Activated CD8-positive, alpha-beta T cell treated with anti-CD3 and anti-CD28 coated beads for 36 hours (primary cell): ENCODE measurements at regions of chr6 and their contacts with region 1.

Region 1: GRCh38 chr6:25223490-25223991 is 55.6 kb upstream of the CARMIL1 start:
- DNase-seq: peak; percentile 77
- ATAC-seq: peak; percentile 77
- H3K4me3 Mint-ChIP-seq: peak overlapping the region; percentile 59
- H3K27ac Mint-ChIP-seq: no peak overlapping the region
- H3K4me1 Mint-ChIP-seq: peaks cover 11% of the 10 kb centered on the region
- H3K27me3 Mint-ChIP-seq: peaks cover 6% of the 10 kb centered on the region
- CTCF ChIP-seq: peak; percentile 97

Region 2: DNA sequence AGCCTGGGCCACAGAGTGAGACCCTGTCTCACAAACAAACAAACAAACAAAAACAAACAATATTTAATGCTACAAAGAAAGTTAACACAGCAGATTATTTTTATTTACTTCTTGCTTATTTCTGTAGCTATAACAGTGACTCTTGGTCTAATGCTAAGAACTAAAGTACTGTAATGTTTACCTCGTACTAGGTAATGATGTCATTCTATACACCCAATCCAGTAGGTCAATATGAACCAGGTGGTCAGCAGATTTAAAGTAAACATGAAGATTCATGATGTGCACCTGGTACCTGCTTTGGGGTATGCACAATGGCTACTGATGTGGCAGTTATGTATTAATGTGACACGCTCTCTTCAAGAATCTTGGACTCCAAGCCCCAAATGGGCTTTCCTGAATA is 19.0 kb after region 1 on chr6:
- CTCF ChIA-PET with region 1: interaction called, 11 read pairs
- POLR2A ChIA-PET with region 1: no interaction called
- intact Hi-C with region 1: no loop called
- DNase-seq: no peak
- ATAC-seq: no peak
- H3K4me3 Mint-ChIP-seq: no peak overlapping the region
- H3K27ac Mint-ChIP-seq: no peak overlapping the region
- H3K4me1 Mint-ChIP-seq: peaks cover 6% of the 10 kb centered on the region
- H3K27me3 Mint-ChIP-seq: peaks cover 2% of the 10 kb centered on the region
- CTCF ChIP-seq: no peak

Region 3: GRCh38 chr6:25250878-25251277 is 27.3 kb after region 1 on chr6:
- CTCF ChIA-PET with region 1: interaction called, 13 read pairs
- POLR2A ChIA-PET with region 1: no interaction called
- intact Hi-C with region 1: no loop called
- DNase-seq: peak; percentile 46
- ATAC-seq: peak; percentile 83
- H3K4me3 Mint-ChIP-seq: no peak overlapping the region
- H3K27ac Mint-ChIP-seq: no peak overlapping the region
- H3K4me1 Mint-ChIP-seq: peaks cover 18% of the 10 kb centered on the region
- H3K27me3 Mint-ChIP-seq: peaks cover 10% of the 10 kb centered on the region
- CTCF ChIP-seq: no peak

Region 4: GRCh38 chr6:25556516-25556915 is 333.0 kb after region 1 on chr6:
- CTCF ChIA-PET with region 1: interaction called, 32 read pairs
- POLR2A ChIA-PET with region 1: no interaction called
- intact Hi-C with region 1: loop called (anchors 5 kb)
- DNase-seq: peak; percentile 90
- ATAC-seq: peak; percentile 66
- H3K4me3 Mint-ChIP-seq: no peak overlapping the region
- H3K27ac Mint-ChIP-seq: no peak overlapping the region
- H3K4me1 Mint-ChIP-seq: peaks cover 2% of the 10 kb centered on the region
- H3K27me3 Mint-ChIP-seq: no peaks in the 10 kb centered on the region
- CTCF ChIP-seq: peak; percentile 80

Region 5: GRCh38 chr6:25564943-25565342 is 341.4 kb after region 1 on chr6:
- CTCF ChIA-PET with region 1: interaction called, 11 read pairs
- POLR2A ChIA-PET with region 1: no interaction called
- intact Hi-C with region 1: no loop called
- DNase-seq: no peak
- ATAC-seq: no peak
- H3K4me3 Mint-ChIP-seq: no peak overlapping the region
- H3K27ac Mint-ChIP-seq: no peak overlapping the region
- H3K4me1 Mint-ChIP-seq: no peaks in the 10 kb centered on the region
- H3K27me3 Mint-ChIP-seq: no peaks in the 10 kb centered on the region
- CTCF ChIP-seq: no peak

Region 6: DNA sequence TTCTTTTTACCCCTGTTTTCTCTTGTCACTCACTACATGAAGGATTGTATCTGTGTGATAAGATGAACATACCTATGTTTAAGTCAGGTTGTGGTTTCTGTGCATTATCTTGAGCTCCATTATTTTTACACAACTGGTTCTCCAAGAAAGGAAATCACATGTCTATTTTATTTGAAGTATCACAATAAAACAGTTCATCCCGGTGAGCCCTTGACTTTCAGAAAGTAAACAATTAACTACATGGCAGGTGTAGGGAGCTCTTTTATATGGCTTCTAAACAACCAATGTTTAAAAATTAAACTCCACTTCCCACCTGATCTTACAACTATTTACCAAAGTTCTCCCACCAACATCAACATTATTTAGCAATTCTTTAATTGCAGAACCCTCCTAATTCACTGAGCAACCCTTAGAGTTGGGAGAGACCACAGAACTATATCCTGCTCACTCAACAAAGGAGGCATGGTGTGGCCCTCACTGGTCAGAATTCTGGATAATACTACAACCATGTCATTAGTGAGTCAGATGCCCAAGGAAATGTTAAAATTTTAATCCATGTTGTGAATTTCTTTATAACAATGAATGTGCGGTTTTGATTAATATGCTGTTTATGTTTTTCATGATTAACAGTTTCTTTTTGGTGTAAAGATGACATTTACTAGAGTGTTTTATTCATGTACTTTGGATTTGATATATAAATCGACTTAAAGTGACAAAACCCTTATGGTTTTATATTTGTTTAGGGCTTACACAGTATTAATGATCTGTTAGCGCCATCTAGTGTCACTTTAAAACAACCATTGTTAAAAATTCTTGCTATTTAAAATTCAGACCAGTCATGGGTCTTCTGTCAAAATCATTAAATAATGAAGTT is 378.5 kb after region 1 on chr6:
- CTCF ChIA-PET with region 1: interaction called, 10 read pairs
- POLR2A ChIA-PET with region 1: no interaction called
- intact Hi-C with region 1: loop called (anchors 5 kb)
- DNase-seq: no peak
- ATAC-seq: no peak
- H3K4me3 Mint-ChIP-seq: no peak overlapping the region
- H3K27ac Mint-ChIP-seq: no peak overlapping the region
- H3K4me1 Mint-ChIP-seq: peaks cover 5% of the 10 kb centered on the region
- H3K27me3 Mint-ChIP-seq: no peaks in the 10 kb centered on the region
- CTCF ChIP-seq: peak; percentile 79